K562 (cell line): ENCODE measurements at regions of chr12 and their contacts with region 1.

Region 1: DNA sequence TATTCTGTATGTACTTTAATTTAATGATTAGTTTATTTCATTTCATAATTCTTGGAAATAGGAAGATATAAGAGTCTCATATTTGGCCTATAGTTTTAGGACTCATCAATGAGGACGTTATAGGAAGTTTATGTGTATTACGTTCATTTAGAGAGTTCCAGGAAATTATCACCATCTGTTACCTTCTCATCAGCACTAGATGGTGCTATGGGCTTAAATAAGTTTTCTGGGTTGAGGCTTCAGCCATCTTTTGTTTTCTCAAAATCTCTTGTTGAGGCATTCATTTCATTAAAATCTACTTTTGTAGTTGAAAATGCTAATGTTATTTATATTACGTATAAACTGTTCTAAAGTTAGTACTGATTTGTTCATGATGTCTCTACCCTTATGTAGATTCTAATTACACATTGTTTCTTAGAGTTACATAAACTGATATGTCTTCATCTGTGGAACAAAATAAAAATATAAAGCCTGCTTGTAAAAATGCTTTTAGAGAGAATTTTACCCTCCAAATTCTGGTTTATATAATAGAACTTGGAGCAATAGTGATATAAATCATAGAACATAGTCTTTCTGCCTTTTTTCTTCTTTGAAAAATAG is 89.2 kb downstream of the CFAP54 start:
- DNase-seq: peak; percentile 10 to 59 (median 24)
- ATAC-seq: peak; percentile 85
- H3K4me3 ChIP-seq: no peak overlapping the region
- H3K27ac ChIP-seq: no peak overlapping the region
- H3K4me1 ChIP-seq: no peaks in the 10 kb centered on the region
- H3K27me3 ChIP-seq: no peaks in the 10 kb centered on the region
- CTCF ChIP-seq: peak; percentile 47 to 81 (median 50); a peak in 4 of 6 replicates
- EP300 ChIP-seq: no peak
- POLR2A ChIP-seq: no peak
- RAD21 ChIP-seq: peak; percentile 80 to 87

Region 2: DNA sequence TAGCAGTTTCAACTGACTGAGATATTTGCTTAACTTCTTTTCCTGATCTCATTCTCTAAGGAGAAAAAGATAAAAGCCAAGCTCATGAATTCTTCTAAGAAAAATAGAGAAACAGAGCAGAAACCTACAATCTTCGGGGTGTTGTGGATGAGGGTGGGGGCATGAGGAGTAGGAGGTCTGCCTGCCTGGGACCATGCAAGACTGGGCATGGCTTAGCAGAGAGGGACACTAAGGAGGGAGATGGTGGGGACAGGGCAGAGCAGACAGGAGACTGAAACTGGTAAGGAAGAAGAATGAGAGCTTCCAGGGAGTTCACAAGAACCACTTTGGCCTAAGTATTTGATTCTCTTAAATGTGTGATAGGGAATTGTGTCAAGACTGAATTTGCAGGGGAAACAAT is 98.7 kb after region 1 on chr12:
- CTCF ChIA-PET with region 1: no interaction called
- POLR2A ChIA-PET with region 1: no interaction called
- in situ Hi-C with region 1: no loop called
- intact Hi-C with region 1: no loop called
- DNase-seq: no peak
- ATAC-seq: no peak
- H3K4me3 ChIP-seq: no peak overlapping the region
- H3K27ac ChIP-seq: no peak overlapping the region
- H3K4me1 ChIP-seq: no peaks in the 10 kb centered on the region
- H3K27me3 ChIP-seq: no peaks in the 10 kb centered on the region
- CTCF ChIP-seq: no peak
- EP300 ChIP-seq: no peak
- POLR2A ChIP-seq: no peak
- RAD21 ChIP-seq: no peak

Region 3: GRCh38 chr12:97118796-97119375 is 540.3 kb after region 1 on chr12:
- CTCF ChIA-PET with region 1: no interaction called
- POLR2A ChIA-PET with region 1: no interaction called
- in situ Hi-C with region 1: no loop called
- intact Hi-C with region 1: no loop called
- DNase-seq: no peak
- ATAC-seq: no peak
- H3K4me3 ChIP-seq: no peak overlapping the region
- H3K27ac ChIP-seq: no peak overlapping the region
- H3K4me1 ChIP-seq: no peaks in the 10 kb centered on the region
- H3K27me3 ChIP-seq: no peaks in the 10 kb centered on the region
- CTCF ChIP-seq: no peak
- EP300 ChIP-seq: no peak
- POLR2A ChIP-seq: no peak
- RAD21 ChIP-seq: no peak

Region 4: DNA sequence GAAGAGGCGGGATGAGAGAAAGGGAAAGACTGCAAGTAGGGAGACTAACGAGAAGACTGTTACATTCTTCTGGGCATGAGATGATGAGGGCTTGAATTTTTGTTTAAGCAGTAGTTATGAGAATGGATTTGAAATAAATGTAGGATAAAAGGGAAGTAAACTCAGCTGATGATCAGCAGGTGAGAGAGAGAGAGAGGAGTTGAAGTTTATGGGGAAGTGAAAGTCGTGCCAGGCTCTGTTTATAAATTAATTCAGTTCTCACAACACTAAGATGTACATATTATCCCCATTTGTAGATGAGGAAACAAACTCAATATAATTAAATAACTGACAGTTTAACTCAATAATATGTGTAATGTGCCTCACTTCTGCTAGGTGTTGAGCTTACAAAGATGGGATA is 714.0 kb after region 1 on chr12:
- CTCF ChIA-PET with region 1: no interaction called
- POLR2A ChIA-PET with region 1: no interaction called
- in situ Hi-C with region 1: no loop called
- intact Hi-C with region 1: no loop called
- DNase-seq: no peak
- ATAC-seq: no peak
- H3K4me3 ChIP-seq: no peak overlapping the region
- H3K27ac ChIP-seq: no peak overlapping the region
- H3K4me1 ChIP-seq: no peaks in the 10 kb centered on the region
- H3K27me3 ChIP-seq: no peaks in the 10 kb centered on the region
- CTCF ChIP-seq: no peak
- EP300 ChIP-seq: no peak
- POLR2A ChIP-seq: no peak
- RAD21 ChIP-seq: no peak

Region 5: GRCh38 chr12:97308576-97309198 is 730.1 kb after region 1 on chr12:
- CTCF ChIA-PET with region 1: no interaction called
- POLR2A ChIA-PET with region 1: no interaction called
- in situ Hi-C with region 1: no loop called
- intact Hi-C with region 1: loop called (anchors 5 kb)
- DNase-seq: peak; percentile 8 to 50 (median 22)
- ATAC-seq: no peak
- H3K4me3 ChIP-seq: no peak overlapping the region
- H3K27ac ChIP-seq: no peak overlapping the region
- H3K4me1 ChIP-seq: no peaks in the 10 kb centered on the region
- H3K27me3 ChIP-seq: no peaks in the 10 kb centered on the region
- CTCF ChIP-seq: peak; percentile 11 to 51 (median 36); a peak in 3 of 6 replicates
- EP300 ChIP-seq: no peak
- POLR2A ChIP-seq: no peak
- RAD21 ChIP-seq: peak; percentile 49 to 53

Region 6: GRCh38 chr12:98373025-98373554 is 1794.5 kb after region 1 on chr12:
- CTCF ChIA-PET with region 1: no interaction called
- POLR2A ChIA-PET with region 1: no interaction called
- in situ Hi-C with region 1: loop called (anchors 25 kb)
- intact Hi-C with region 1: loop called (anchors 5 kb)
- DNase-seq: peak; percentile 26 to 65 (median 38)
- ATAC-seq: peak; percentile 90
- H3K4me3 ChIP-seq: no peak overlapping the region
- H3K27ac ChIP-seq: no peak overlapping the region
- H3K4me1 ChIP-seq: no peaks in the 10 kb centered on the region; a peak in 1 of 5 replicates
- H3K27me3 ChIP-seq: no peaks in the 10 kb centered on the region
- CTCF ChIP-seq: peak; percentile 55 to 77 (median 56); a peak in 5 of 6 replicates
- EP300 ChIP-seq: no peak
- POLR2A ChIP-seq: no peak
- RAD21 ChIP-seq: peak; percentile 68 to 86